ENCODE measurements at regions of chr10 and their contacts with region 1.

Region 1: DNA sequence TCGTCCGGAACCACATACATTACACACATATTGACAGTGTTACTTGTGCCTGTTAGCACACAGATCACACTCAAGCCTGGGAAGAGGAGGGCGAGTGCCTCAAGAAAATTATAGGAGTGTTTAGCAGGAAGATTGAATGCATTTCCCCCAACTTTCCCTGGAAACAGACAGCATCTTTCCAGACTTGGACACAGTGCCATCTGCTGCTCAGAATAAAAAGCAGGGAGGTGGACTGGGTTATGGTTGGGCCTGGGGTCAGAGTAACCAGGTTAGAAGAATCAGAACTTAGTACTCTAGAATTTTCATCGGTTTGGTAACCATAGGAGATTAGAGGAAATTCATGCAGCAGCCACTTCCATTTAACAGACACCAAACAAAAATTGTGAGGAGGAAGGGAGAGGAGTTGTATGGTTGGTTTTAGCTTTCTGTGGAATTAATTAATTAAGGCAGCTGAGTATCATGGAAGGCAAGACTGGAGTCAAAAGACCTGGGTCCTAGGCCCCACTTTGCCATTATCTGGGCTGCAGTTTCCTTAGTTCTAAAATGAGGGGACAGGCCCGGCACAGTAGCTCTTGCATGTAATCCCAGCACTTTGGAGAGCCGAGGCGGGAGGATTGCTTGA is 43.4 kb upstream of the OPTN start:
- DNase-seq: peak; percentile 38
- H3K27ac ChIP-seq: no peak overlapping the region
- CTCF ChIP-seq: peak; percentile 25

Region 2: DNA sequence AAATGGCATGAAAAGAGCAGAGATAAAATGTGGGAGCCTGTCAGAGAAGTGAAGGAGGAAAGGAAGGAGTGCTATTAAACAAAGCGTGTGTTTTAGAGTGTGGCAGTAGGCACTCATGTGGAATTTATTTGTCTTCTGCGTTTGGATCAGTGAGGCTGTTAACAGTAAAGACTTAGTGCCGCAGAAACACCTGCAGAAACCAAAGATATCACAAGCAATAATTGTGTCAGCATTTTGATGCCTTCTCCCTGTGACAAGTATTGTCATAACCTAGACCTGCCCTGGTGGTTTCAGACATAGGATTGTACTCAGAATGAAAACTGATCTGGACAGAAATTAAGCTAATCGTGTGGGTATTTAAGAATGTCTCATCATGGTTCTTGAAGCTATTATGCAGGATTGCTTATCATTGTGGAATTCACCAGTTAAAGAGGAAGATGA is 516.2 kb before region 1 on chr10:
- CTCF ChIA-PET with region 1: no interaction called
- POLR2A ChIA-PET with region 1: interaction called, 13 read pairs
- DNase-seq: no peak
- H3K27ac ChIP-seq: no peak overlapping the region
- CTCF ChIP-seq: no peak

Region 3: GRCh38 chr10:13016426-13016825 is 40.1 kb before region 1 on chr10:
- CTCF ChIA-PET with region 1: no interaction called
- POLR2A ChIA-PET with region 1: no interaction called
- DNase-seq: no peak
- H3K27ac ChIP-seq: no peak overlapping the region
- CTCF ChIP-seq: no peak